ENCODE measurements at regions of chr12 and their contacts with region 1.

Region 1: DNA sequence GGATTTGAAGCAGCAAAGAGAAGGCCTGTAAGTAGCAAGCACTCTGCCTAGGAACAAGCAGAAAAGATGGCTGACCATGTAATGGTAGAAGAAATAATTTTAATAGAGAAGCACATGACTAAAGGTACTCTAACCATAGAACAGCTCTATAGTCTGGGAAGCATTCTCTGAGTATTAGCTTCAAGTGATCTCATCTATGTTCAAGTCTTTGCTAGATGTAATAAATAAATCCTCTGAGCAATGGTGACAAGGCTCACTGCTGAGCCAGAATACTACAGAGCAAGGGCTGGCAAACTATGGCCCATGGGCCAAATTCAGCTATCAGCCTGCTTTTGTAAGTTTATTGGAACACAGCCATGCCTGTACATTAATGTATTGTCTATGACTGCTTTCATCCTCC is 84.8 kb downstream of the PEBP1 start:
- DNase-seq: no peak
- ATAC-seq: peak; percentile 46
- H3K4me3 ChIP-seq: no peak overlapping the region
- H3K27ac ChIP-seq: no peak overlapping the region
- H3K4me1 ChIP-seq: peaks cover 5% of the 10 kb centered on the region
- H3K27me3 ChIP-seq: no peaks in the 10 kb centered on the region
- CTCF ChIP-seq: no peak
- EP300 ChIP-seq: no peak
- POLR2A ChIP-seq: no peak
- RAD21 ChIP-seq: no peak

Region 2: GRCh38 chr12:118160536-118160935 is 60.2 kb before region 1 on chr12:
- CTCF ChIA-PET with region 1: no interaction called
- POLR2A ChIA-PET with region 1: no interaction called
- RAD21 ChIA-PET with region 1: no interaction called
- SMC1A ChIA-PET with region 1: no interaction called
- in situ Hi-C with region 1: no loop called
- intact Hi-C with region 1: no loop called
- DNase-seq: no peak
- ATAC-seq: no peak
- H3K4me3 ChIP-seq: no peak overlapping the region
- H3K27ac ChIP-seq: no peak overlapping the region
- H3K4me1 ChIP-seq: peaks cover 4% of the 10 kb centered on the region; the same call in 1 of the 2 replicates
- H3K27me3 ChIP-seq: no peaks in the 10 kb centered on the region
- CTCF ChIP-seq: no peak
- EP300 ChIP-seq: no peak
- POLR2A ChIP-seq: no peak
- RAD21 ChIP-seq: no peak

Region 3: DNA sequence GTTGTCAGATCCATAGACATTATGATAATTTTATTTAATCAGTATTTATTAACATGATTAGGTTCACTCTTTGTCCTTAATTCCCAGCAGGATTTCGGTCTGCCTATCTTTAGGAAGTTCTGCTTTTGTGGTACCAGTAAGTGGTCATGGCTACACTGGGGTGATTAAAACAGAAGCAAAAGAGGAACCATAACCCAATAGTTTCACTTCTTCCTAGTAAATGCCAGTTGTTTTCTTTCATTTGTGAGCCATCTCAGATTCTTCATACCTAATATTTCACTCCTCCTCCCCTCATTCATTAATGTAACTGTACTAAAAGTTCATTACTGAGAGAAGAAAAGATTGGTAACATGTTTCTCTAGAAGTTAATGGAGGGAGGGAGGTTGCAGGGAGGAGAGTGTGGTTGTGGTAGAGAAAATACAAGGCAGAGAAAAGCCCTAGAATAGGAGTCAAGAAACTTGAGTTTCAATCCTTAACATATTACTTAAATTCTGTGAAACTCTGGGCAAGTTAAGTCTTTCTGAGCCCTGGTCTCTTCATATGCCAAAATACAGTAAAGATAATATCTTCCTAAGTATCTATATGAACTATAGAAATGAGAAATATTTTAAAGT is 16.5 kb after region 1 on chr12:
- CTCF ChIA-PET with region 1: interaction called, 4 read pairs
- POLR2A ChIA-PET with region 1: interaction called, 3 read pairs
- RAD21 ChIA-PET with region 1: interaction called, 3 read pairs
- SMC1A ChIA-PET with region 1: interaction called, 10 read pairs
- in situ Hi-C with region 1: no loop called
- intact Hi-C with region 1: no loop called
- DNase-seq: peak; percentile 65
- ATAC-seq: peak; percentile 93
- H3K4me3 ChIP-seq: no peak overlapping the region
- H3K27ac ChIP-seq: peak overlapping the region; percentile 75
- H3K4me1 ChIP-seq: peaks cover 26% of the 10 kb centered on the region
- H3K27me3 ChIP-seq: no peaks in the 10 kb centered on the region
- CTCF ChIP-seq: no peak
- EP300 ChIP-seq: peak; percentile 27 to 76; a peak in 1 of 4 replicates
- POLR2A ChIP-seq: no peak
- RAD21 ChIP-seq: no peak

Region 4: GRCh38 chr12:118346895-118347294 is 126.2 kb after region 1 on chr12:
- CTCF ChIA-PET with region 1: no interaction called
- POLR2A ChIA-PET with region 1: no interaction called
- RAD21 ChIA-PET with region 1: no interaction called
- SMC1A ChIA-PET with region 1: no interaction called
- in situ Hi-C with region 1: no loop called
- intact Hi-C with region 1: no loop called
- DNase-seq: no peak
- ATAC-seq: peak; percentile 89
- H3K4me3 ChIP-seq: no peak overlapping the region; the same call in 1 of the 2 replicates
- H3K27ac ChIP-seq: peak overlapping the region; percentile 21
- H3K4me1 ChIP-seq: peaks cover 21% of the 10 kb centered on the region; the same call in 1 of the 2 replicates
- H3K27me3 ChIP-seq: no peaks in the 10 kb centered on the region
- CTCF ChIP-seq: no peak
- EP300 ChIP-seq: no peak
- POLR2A ChIP-seq: no peak
- RAD21 ChIP-seq: no peak

Measured in GM12878 (cell line).